Activated B cell treated with CpG ODN at 0.5 μM for 24 hours (primary cell): ENCODE measurements at regions of chr16 and their contacts with region 1.

Region 1: GRCh38 chr16:57185944-57186871 is at the starts of genes PSME3IP1 and RSPRY1:
- DNase-seq: peak; percentile 89
- ATAC-seq: peak; percentile 91
- H3K4me3 Mint-ChIP-seq: peak within 1 kb of the TSS; percentile 92
- H3K27ac Mint-ChIP-seq: peak within 1 kb of the TSS; percentile 95
- H3K4me1 Mint-ChIP-seq: peaks cover 57% of the 10 kb centered on the region
- H3K27me3 Mint-ChIP-seq: no peaks in the 10 kb centered on the region
- CTCF ChIP-seq: no peak
- total RNA-seq, gene PSME3IP1: 131 and 147 TPM in 2 replicates
- total RNA-seq, gene RSPRY1: 32.6 and 39.9 TPM in 2 replicates

Region 2: GRCh38 chr16:56729735-56730662 is 456.2 kb before region 1 on chr16 and contains the start of gene NUP93:
- CTCF ChIA-PET with region 1: no interaction called
- POLR2A ChIA-PET with region 1: no interaction called
- intact Hi-C with region 1: loop called (anchors 2 kb)
- DNase-seq: peak; percentile 79
- ATAC-seq: peak; percentile 89
- H3K4me3 Mint-ChIP-seq: peak within 1 kb of the TSS; percentile 90
- H3K27ac Mint-ChIP-seq: peak within 1 kb of the TSS; percentile 84
- H3K4me1 Mint-ChIP-seq: peaks cover 20% of the 10 kb centered on the region
- H3K27me3 Mint-ChIP-seq: no peaks in the 10 kb centered on the region
- CTCF ChIP-seq: no peak
- total RNA-seq, gene NUP93: 104 and 111 TPM in 2 replicates

Region 3: DNA sequence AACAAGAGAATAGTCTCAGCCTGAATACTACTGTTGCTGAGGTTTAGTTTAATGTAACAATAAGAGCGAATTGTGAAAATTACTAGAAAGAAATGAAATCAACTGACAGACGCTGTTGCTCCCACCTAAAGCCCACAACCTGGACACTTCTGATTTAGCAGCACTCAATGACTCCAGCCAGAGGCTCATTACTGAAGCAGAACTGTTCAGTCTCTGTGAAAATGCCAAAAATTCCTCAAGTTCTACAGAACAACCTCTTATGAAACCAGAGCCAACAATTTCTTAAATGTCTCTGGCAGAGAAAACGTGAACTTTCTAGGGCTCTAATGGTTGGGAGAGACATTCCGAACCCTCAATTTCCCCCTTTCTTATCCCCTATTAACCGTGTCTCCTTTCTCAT is 10.3 kb before region 1 on chr16:
- CTCF ChIA-PET with region 1: interaction called, 4 read pairs
- POLR2A ChIA-PET with region 1: interaction called, 10 read pairs
- intact Hi-C with region 1: no loop called
- DNase-seq: no peak
- ATAC-seq: no peak
- H3K4me3 Mint-ChIP-seq: no peak overlapping the region
- H3K27ac Mint-ChIP-seq: no peak overlapping the region
- H3K4me1 Mint-ChIP-seq: no peaks in the 10 kb centered on the region
- H3K27me3 Mint-ChIP-seq: no peaks in the 10 kb centered on the region
- CTCF ChIP-seq: no peak

Region 4: DNA sequence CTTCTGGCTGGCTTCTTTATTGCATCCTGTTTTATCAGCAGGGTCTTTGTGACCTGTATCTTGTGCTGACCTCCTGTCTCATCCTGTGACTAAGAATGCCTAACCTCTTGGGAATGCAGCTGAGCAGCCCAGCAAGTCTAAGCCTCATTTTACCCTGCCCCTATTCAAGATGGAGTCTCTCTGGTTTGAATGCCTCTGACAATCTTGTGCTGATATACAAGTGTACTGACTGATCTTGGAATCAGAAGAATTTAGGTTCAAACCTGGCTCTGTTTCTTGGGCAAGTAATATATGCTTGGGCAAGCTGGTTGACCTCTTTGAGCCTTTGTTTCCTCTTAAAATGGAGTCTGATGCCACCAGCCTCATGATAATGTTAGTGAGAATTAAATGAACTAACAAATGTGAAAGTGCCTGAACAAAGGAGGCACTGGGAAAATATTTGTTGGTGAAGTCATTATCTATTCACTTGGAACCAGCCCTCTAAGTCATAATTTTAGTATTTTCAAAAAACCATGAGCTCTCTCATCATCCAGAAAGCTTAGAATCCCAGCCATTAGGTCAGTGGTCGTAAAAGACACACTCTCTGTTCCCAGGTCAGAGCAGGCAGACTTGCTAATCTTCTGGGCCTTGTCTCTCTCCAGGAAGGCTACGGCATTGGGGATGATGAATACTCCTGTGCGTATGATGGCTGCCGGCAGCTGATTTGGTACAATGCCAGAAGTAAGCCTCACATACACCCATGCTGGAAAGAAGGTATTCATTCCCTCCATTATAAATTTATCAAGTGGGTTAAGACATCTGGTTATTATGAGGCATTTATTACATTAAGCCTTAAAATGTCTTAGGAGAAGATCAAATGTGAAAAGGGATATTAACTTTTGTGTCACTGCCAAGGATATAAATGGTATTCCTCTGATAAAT is 40.8 kb after region 1 on chr16:
- CTCF ChIA-PET with region 1: no interaction called
- POLR2A ChIA-PET with region 1: no interaction called
- intact Hi-C with region 1: no loop called
- DNase-seq: no peak
- ATAC-seq: no peak
- H3K4me3 Mint-ChIP-seq: no peak overlapping the region
- H3K27ac Mint-ChIP-seq: no peak overlapping the region
- H3K4me1 Mint-ChIP-seq: no peaks in the 10 kb centered on the region
- H3K27me3 Mint-ChIP-seq: no peaks in the 10 kb centered on the region
- CTCF ChIP-seq: no peak

Region 5: DNA sequence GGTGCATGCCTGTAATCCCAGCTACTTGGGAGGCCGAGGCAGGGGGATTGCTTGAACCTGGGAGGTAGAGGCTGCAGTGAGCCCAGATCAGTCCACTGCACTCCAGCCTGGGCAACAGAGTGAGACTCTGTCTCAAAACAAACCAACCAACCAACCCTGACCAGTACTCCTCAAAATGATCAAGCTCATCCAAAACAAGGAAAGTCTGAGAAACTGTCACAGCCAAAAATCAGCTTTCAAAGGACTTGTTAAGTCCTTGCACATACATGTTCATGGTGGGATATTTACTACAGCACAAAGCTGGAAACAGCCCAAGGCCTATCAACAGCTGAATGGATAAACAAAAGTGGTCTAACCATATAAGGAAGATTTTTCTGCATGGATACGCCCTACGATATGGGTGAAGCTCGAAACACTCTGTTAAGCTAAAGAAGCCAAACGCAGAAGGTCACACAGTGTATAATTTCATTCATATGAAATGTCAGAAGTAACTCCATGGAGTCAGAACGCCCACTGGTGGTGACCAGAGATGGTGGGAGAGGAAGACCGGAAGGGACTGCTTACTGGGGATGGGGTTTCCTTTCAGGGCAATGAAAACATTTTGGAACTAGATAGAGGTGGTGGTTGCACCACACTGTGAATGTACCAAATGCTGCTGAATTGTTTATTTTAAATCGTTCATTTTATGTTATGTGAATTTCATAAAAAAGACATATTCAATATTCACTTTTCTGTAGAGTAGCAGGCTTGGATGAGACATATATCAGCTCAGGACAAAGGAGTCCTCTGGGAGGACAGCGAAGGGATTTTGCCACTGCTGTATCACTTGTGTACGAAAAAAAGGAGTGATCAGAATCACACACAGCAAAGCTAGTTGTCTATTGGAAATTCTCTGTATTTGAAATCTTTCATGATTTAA is 236.1 kb after region 1 on chr16:
- CTCF ChIA-PET with region 1: no interaction called
- POLR2A ChIA-PET with region 1: no interaction called
- intact Hi-C with region 1: loop called (anchors 2 kb)
- DNase-seq: no peak
- ATAC-seq: peak; percentile 29
- H3K4me3 Mint-ChIP-seq: no peak overlapping the region
- H3K27ac Mint-ChIP-seq: no peak overlapping the region
- H3K4me1 Mint-ChIP-seq: peaks cover 14% of the 10 kb centered on the region
- H3K27me3 Mint-ChIP-seq: no peaks in the 10 kb centered on the region
- CTCF ChIP-seq: no peak

Region 6: GRCh38 chr16:57462209-57462977 is 276.2 kb after region 1 on chr16 and contains the start of gene POLR2C:
- CTCF ChIA-PET with region 1: no interaction called
- POLR2A ChIA-PET with region 1: no interaction called
- intact Hi-C with region 1: loop called (anchors 1 kb)
- DNase-seq: peak; percentile 93
- ATAC-seq: peak; percentile 97
- H3K4me3 Mint-ChIP-seq: peak within 1 kb of the TSS; percentile 100
- H3K27ac Mint-ChIP-seq: peak within 1 kb of the TSS; percentile 99
- H3K4me1 Mint-ChIP-seq: peaks cover 29% of the 10 kb centered on the region
- H3K27me3 Mint-ChIP-seq: no peaks in the 10 kb centered on the region
- CTCF ChIP-seq: peak; percentile 38
- total RNA-seq, gene POLR2C: 52.2 and 56.6 TPM in 2 replicates